ENCODE measurements at regions of chr6 and their contacts with region 1.

Region 1: DNA sequence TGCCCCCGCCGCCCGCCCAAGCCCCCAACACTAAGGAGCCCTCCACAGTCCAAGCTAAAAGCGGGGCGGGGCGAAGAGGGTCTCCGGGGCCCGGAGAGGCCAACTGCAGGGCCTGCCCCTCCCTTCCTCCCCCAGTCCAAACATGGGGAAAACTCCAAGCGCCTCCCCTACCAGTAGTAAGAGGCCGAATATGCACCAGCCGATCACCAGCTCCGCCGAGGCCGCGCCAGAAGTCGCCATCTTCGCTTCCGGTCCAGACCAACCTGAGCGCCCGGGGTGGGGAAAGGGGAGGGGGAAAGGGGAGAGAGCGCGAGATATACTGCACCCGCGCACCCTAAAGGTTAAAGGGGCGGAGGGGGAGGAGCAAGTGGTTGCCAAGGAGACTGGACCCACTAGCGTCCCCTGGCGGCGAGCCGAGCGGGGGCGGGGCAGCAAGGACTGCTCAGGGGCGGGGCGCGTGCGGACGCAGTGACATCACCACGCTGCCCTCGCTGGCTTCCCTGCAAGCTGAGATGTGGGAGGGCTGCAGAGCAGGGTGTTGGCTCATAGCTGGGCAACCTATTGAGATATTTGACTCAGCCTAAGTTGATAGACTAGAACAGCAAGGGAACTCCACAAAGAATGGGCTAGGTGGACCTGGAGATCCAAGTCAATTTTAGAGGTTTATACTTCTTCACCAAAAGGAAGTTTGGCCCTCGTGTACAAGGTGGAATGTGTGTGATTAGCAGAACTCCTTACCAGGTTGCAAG is at the start of gene LMBRD1:
- DNase-seq: peak; percentile 99
- H3K4me3 Mint-ChIP-seq: peak within 1 kb of the TSS; percentile 87
- H3K27ac Mint-ChIP-seq: peak within 1 kb of the TSS; percentile 89
- H3K4me1 Mint-ChIP-seq: peaks cover 46% of the 10 kb centered on the region
- H3K27me3 Mint-ChIP-seq: no peaks in the 10 kb centered on the region
- total RNA-seq, gene LMBRD1: 17.4 to 18.2 TPM

Region 2: GRCh38 chr6:69314531-69314930 is 482.3 kb before region 1 on chr6:
- CTCF ChIA-PET with region 1: no interaction called
- POLR2A ChIA-PET with region 1: no interaction called
- intact Hi-C with region 1: no loop called
- DNase-seq: no peak
- H3K4me3 Mint-ChIP-seq: no peak overlapping the region
- H3K27ac Mint-ChIP-seq: no peak overlapping the region
- H3K4me1 Mint-ChIP-seq: no peaks in the 10 kb centered on the region
- H3K27me3 Mint-ChIP-seq: no peaks in the 10 kb centered on the region

Region 3: GRCh38 chr6:69527921-69528476 is 268.8 kb before region 1 on chr6:
- CTCF ChIA-PET with region 1: no interaction called
- POLR2A ChIA-PET with region 1: no interaction called
- intact Hi-C with region 1: no loop called
- DNase-seq: no peak
- H3K4me3 Mint-ChIP-seq: no peak overlapping the region
- H3K27ac Mint-ChIP-seq: no peak overlapping the region
- H3K4me1 Mint-ChIP-seq: no peaks in the 10 kb centered on the region
- H3K27me3 Mint-ChIP-seq: no peaks in the 10 kb centered on the region

Region 4: DNA sequence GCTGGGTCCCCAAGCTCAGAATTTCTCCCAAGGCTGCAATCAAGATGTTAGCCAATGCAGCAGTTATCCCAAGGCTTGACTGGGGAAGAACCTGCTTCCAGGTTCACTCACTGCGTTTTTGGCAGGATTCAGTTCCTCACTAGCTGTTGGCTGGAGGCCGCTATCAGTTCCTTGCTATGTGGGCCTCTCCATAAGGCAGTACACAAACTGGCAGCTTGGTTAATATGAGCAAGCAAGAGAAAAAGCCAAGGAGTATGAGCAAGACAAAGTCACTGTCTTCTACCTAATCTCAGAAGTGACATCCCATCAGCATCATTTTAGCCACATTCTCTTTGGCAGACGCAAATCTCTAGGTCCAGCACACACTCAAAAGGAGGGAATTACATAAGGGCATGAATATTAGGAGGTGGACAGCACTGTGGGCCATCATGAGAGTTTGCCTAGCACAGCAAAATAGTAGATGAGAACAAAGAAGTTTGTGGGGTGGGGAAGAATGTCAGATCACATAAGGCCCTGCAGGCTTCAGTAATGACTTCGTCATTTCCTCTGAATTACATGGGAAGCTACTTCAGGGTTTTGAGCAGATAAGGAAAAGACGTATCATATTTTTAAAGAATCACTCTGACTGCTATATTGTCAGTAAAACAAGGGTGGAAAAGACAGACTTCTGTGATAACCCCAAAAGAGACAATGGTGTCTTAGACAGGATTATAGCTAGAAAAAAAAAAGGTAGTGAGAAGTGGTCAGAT is 25.5 kb before region 1 on chr6:
- CTCF ChIA-PET with region 1: interaction called, 4 read pairs
- POLR2A ChIA-PET with region 1: interaction called, 3 read pairs
- intact Hi-C with region 1: loop called (anchors 1 kb)
- DNase-seq: no peak
- H3K4me3 Mint-ChIP-seq: no peak overlapping the region
- H3K27ac Mint-ChIP-seq: peak overlapping the region; percentile 74
- H3K4me1 Mint-ChIP-seq: peaks cover 39% of the 10 kb centered on the region
- H3K27me3 Mint-ChIP-seq: no peaks in the 10 kb centered on the region

Region 5: GRCh38 chr6:69780585-69781178 is 16.1 kb before region 1 on chr6:
- CTCF ChIA-PET with region 1: interaction called, 10 read pairs
- POLR2A ChIA-PET with region 1: interaction called, 4 read pairs
- intact Hi-C with region 1: loop called (anchors 1 kb)
- DNase-seq: no peak
- H3K4me3 Mint-ChIP-seq: no peak overlapping the region
- H3K27ac Mint-ChIP-seq: no peak overlapping the region
- H3K4me1 Mint-ChIP-seq: peaks cover 48% of the 10 kb centered on the region
- H3K27me3 Mint-ChIP-seq: no peaks in the 10 kb centered on the region

Region 6: GRCh38 chr6:69813508-69813907 is 16.7 kb after region 1 on chr6:
- CTCF ChIA-PET with region 1: interaction called, 47 read pairs
- POLR2A ChIA-PET with region 1: interaction called, 12 read pairs
- intact Hi-C with region 1: loop called (anchors 1 kb)
- DNase-seq: no peak
- H3K4me3 Mint-ChIP-seq: no peak overlapping the region
- H3K27ac Mint-ChIP-seq: peak overlapping the region; percentile 75
- H3K4me1 Mint-ChIP-seq: peaks cover 58% of the 10 kb centered on the region
- H3K27me3 Mint-ChIP-seq: no peaks in the 10 kb centered on the region

Region 7: DNA sequence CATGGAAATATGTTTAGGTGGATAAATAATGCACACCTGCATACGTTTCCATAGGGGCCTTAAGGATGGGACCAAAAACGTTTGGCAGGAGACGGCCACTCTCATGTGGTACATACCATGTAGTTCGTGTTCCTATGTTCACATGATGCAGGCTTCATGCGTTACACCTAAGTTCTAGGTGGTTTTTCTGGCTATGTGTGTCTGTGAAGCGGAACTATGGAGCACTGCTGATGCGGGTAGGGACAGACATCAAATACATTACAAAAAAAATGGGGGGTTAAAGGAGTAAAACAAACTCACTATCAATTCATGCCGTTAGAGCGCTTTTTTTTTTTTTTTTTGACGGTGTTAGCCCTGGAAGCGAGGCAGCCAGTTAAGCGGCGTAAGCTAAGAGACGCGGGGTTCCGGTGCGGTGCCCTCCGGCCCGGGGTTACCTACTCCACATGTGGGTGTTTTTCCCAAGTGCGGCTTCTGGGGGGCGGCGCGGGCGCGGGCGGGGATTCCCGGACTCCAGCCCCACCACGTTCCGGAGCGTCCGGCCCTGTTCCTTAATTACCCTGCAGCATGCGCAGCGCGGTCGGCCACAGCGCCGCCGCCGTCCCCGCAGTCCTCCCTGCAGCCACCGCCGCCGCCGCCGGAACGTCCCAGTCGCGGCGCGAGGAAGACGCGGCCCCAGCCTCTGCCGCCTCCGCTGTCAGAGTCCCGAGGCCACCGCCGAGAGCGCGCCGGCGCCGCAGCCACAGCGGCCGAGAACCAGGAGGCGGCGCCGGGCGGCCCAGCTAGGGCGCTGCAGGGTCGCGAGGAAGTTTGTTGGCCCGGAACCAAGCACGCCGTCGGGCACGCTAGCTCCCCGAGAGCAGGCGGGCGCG is 70.2 kb after region 1 on chr6:
- CTCF ChIA-PET with region 1: interaction called, 7 read pairs
- POLR2A ChIA-PET with region 1: interaction called, 11 read pairs
- intact Hi-C with region 1: loop called (anchors 1 kb)
- DNase-seq: peak; percentile 69
- H3K4me3 Mint-ChIP-seq: peak overlapping the region; percentile 73
- H3K27ac Mint-ChIP-seq: no peak overlapping the region
- H3K4me1 Mint-ChIP-seq: peaks cover 27% of the 10 kb centered on the region
- H3K27me3 Mint-ChIP-seq: peaks cover 16% of the 10 kb centered on the region

Region 8: GRCh38 chr6:69881322-69882151 is 84.7 kb after region 1 on chr6:
- CTCF ChIA-PET with region 1: no interaction called
- POLR2A ChIA-PET with region 1: no interaction called
- intact Hi-C with region 1: no loop called
- DNase-seq: no peak
- H3K4me3 Mint-ChIP-seq: no peak overlapping the region
- H3K27ac Mint-ChIP-seq: no peak overlapping the region
- H3K4me1 Mint-ChIP-seq: peaks cover 4% of the 10 kb centered on the region
- H3K27me3 Mint-ChIP-seq: peaks cover 13% of the 10 kb centered on the region

Region 9: DNA sequence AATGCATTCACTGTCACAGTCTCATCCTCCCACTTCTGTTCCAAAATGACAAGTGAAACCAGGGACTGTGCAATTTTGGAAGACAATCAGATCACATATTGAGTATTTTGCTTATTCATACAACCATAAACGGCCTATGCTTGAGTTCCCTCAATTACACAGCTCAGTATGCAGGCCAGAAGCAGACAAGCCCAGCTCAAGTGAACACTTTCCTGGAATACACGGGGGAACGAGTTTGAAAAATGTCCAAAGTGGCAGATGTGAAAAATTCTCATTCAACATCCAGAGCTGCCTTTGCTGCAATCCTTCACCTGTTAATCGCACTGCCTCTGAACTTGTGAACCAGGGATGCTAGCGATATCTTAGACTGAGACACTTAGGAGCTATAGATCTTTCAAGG is 315.9 kb after region 1 on chr6:
- CTCF ChIA-PET with region 1: no interaction called
- POLR2A ChIA-PET with region 1: no interaction called
- intact Hi-C with region 1: no loop called
- DNase-seq: no peak
- H3K4me3 Mint-ChIP-seq: no peak overlapping the region
- H3K27ac Mint-ChIP-seq: no peak overlapping the region
- H3K4me1 Mint-ChIP-seq: no peaks in the 10 kb centered on the region
- H3K27me3 Mint-ChIP-seq: peaks cover 14% of the 10 kb centered on the region

Region 10: DNA sequence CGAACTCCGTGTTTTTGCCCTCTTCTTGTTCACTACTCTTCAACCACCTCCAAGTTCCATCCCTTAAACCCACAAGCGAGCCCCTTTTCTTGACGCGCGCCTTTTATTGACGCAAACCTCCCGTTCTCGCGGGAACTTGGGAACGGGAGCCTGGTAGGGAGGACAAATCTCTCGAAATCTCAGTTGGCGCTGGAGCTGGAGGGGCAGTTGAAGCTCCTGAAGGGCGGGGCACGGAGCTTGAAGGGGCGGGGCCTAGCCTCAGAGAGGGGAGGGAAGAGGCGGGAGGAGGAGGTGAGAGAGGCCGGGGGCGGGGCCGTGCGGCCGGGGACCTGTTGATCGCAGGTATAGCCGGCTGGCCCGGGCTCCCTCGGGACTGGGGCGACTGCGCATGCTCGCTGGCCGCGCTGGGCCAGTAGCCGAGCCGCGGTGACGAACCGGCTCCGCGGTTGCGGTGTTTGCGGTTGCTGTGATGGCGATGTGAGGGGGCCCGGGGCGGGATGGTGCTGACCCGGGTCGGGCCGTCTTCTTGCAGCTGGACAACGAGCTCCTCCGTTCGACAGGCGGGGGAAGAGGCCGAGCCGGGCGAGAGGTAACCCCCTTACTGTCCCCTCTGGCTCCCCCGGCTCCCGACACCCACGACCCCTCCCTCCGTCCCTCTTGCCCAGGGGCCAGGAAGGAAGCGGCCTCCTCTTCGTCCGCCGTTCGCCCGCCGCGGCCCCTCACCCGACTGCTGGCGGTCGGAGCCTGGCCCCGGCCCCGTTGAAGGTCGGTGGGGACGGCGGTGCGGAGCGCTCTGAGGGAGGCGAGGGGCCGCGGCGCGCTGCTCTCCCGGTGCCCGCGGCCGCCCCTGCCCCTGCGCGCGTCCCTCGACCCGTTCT is 616.5 kb after region 1 on chr6 and contains the start of gene FAM135A:
- CTCF ChIA-PET with region 1: no interaction called
- POLR2A ChIA-PET with region 1: no interaction called
- intact Hi-C with region 1: loop called (anchors 1 kb)
- DNase-seq: peak; percentile 98
- H3K4me3 Mint-ChIP-seq: peak within 1 kb of the TSS; percentile 88
- H3K27ac Mint-ChIP-seq: peak within 1 kb of the TSS; percentile 75
- H3K4me1 Mint-ChIP-seq: peaks cover 17% of the 10 kb centered on the region
- H3K27me3 Mint-ChIP-seq: no peaks in the 10 kb centered on the region
- total RNA-seq, gene FAM135A: 9.0 to 9.2 TPM